Activated CD8-positive, alpha-beta T cell treated with anti-CD3 and anti-CD28 coated beads for 36 hours (primary cell): ENCODE measurements at regions of chr6 and their contacts with region 1.

Region 1: GRCh38 chr6:83221889-83222479 is 28.8 kb downstream of the RWDD2A start:
- DNase-seq: no peak
- ATAC-seq: peak; percentile 37
- H3K4me3 Mint-ChIP-seq: no peak overlapping the region
- H3K27ac Mint-ChIP-seq: no peak overlapping the region
- H3K4me1 Mint-ChIP-seq: no peaks in the 10 kb centered on the region
- H3K27me3 Mint-ChIP-seq: no peaks in the 10 kb centered on the region
- CTCF ChIP-seq: peak; percentile 66

Region 2: GRCh38 chr6:83119742-83120300 is 102.2 kb before region 1 on chr6:
- CTCF ChIA-PET with region 1: no interaction called
- POLR2A ChIA-PET with region 1: no interaction called
- intact Hi-C with region 1: no loop called
- DNase-seq: no peak
- ATAC-seq: no peak
- H3K4me3 Mint-ChIP-seq: no peak overlapping the region
- H3K27ac Mint-ChIP-seq: no peak overlapping the region
- H3K4me1 Mint-ChIP-seq: no peaks in the 10 kb centered on the region
- H3K27me3 Mint-ChIP-seq: no peaks in the 10 kb centered on the region
- CTCF ChIP-seq: no peak

Region 3: DNA sequence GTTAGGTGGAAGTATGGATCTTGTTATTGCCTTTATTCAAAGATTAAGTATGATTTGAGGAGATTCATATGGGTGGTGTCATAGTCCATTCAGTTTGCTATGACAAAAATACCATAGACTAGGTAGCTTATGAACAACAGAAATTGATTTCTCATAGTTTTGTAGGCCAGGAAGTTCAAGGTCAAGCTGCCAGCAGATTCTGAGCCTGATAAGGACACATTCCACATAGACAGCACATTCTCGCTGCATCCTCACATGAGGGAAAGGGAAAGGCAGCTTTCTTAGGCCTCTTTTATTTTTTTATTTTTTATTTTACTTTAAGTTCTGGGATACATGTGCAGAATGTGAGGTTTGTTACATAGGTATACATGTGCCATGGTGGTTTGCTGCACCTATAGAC is 181.2 kb after region 1 on chr6:
- CTCF ChIA-PET with region 1: no interaction called
- POLR2A ChIA-PET with region 1: no interaction called
- intact Hi-C with region 1: no loop called
- DNase-seq: no peak
- ATAC-seq: no peak
- H3K4me3 Mint-ChIP-seq: no peak overlapping the region
- H3K27ac Mint-ChIP-seq: no peak overlapping the region
- H3K4me1 Mint-ChIP-seq: no peaks in the 10 kb centered on the region
- H3K27me3 Mint-ChIP-seq: peaks cover 1% of the 10 kb centered on the region
- CTCF ChIP-seq: no peak

Region 4: DNA sequence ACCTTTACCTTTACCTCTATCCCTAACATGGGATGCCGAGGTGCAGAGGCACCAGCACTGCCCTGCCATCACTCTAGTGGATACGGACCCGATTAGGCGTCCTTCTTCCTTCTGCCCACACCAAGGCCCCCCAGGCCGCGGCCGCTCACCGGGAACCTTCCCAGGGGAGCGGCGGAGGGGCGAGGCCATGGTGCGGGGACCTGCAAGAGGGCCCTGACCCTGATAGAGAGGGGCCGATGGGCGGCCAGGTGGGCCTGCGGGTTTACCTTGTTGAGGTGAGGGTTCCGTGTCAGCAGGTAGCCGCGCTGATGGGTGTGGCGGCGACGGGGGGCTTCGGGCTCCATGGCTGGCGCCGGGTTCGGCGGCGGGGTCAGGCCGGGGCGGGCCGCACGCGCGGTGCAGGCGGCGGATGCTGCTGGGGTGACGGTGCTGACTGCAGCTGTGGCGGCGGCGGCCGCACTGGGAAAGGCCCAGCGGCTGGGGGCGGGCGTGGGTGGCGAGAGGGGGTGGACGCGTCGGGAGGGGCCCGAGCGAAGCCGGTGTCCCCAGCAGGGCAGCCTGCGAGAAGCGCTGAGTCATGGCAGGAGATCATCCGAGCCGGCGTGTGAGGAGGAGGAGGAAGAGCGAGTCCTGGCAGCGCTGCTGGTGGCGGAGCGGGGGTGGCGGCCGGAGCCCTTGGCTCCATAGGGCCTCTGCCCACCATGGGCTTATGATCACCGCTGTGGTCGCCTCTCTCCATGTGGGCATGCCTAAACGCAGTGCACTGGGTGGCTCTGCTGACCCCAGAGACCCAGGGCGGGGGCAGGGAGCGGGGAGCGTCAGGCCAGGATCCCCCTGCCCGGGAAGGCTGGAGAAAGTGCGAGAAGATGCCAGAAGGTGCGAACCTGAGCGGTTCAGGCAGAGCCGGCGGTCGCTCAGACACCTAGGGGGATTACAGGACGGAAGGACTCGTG is 208.9 kb after region 1 on chr6 and contains the start of gene ME1:
- CTCF ChIA-PET with region 1: no interaction called
- POLR2A ChIA-PET with region 1: no interaction called
- intact Hi-C with region 1: no loop called
- DNase-seq: peak; percentile 50
- ATAC-seq: peak; percentile 84
- H3K4me3 Mint-ChIP-seq: peak within 1 kb of the TSS; percentile 32
- H3K27ac Mint-ChIP-seq: no peak within 1 kb of the TSS
- H3K4me1 Mint-ChIP-seq: no peaks in the 10 kb centered on the region
- H3K27me3 Mint-ChIP-seq: peaks cover 27% of the 10 kb centered on the region
- CTCF ChIP-seq: no peak
- total RNA-seq, gene ME1: 0.25 to 0.49 TPM

Region 5: GRCh38 chr6:83514866-83515466 is 293.0 kb after region 1 on chr6:
- CTCF ChIA-PET with region 1: interaction called, 156 read pairs
- POLR2A ChIA-PET with region 1: no interaction called
- intact Hi-C with region 1: loop called (anchors 1 kb)
- DNase-seq: peak; percentile 12
- ATAC-seq: peak; percentile 42
- H3K4me3 Mint-ChIP-seq: no peak overlapping the region
- H3K27ac Mint-ChIP-seq: no peak overlapping the region
- H3K4me1 Mint-ChIP-seq: peaks cover 6% of the 10 kb centered on the region
- H3K27me3 Mint-ChIP-seq: peaks cover 23% of the 10 kb centered on the region
- CTCF ChIP-seq: peak; percentile 77

Region 6: GRCh38 chr6:83536034-83536646 is 314.2 kb after region 1 on chr6:
- CTCF ChIA-PET with region 1: interaction called, 10 read pairs
- POLR2A ChIA-PET with region 1: no interaction called
- intact Hi-C with region 1: no loop called
- DNase-seq: peak; percentile 71
- ATAC-seq: no peak
- H3K4me3 Mint-ChIP-seq: no peak overlapping the region
- H3K27ac Mint-ChIP-seq: no peak overlapping the region
- H3K4me1 Mint-ChIP-seq: no peaks in the 10 kb centered on the region
- H3K27me3 Mint-ChIP-seq: no peaks in the 10 kb centered on the region
- CTCF ChIP-seq: peak; percentile 75

Region 7: GRCh38 chr6:83574787-83575186 is 352.8 kb after region 1 on chr6:
- CTCF ChIA-PET with region 1: no interaction called
- POLR2A ChIA-PET with region 1: no interaction called
- intact Hi-C with region 1: no loop called
- DNase-seq: no peak
- ATAC-seq: no peak
- H3K4me3 Mint-ChIP-seq: no peak overlapping the region
- H3K27ac Mint-ChIP-seq: no peak overlapping the region
- H3K4me1 Mint-ChIP-seq: no peaks in the 10 kb centered on the region
- H3K27me3 Mint-ChIP-seq: peaks cover 1% of the 10 kb centered on the region
- CTCF ChIP-seq: no peak